Transverse colon (tissue), 4 donors: ENCODE measurements at regions of chr6 and their contacts with region 1.

Region 1: DNA sequence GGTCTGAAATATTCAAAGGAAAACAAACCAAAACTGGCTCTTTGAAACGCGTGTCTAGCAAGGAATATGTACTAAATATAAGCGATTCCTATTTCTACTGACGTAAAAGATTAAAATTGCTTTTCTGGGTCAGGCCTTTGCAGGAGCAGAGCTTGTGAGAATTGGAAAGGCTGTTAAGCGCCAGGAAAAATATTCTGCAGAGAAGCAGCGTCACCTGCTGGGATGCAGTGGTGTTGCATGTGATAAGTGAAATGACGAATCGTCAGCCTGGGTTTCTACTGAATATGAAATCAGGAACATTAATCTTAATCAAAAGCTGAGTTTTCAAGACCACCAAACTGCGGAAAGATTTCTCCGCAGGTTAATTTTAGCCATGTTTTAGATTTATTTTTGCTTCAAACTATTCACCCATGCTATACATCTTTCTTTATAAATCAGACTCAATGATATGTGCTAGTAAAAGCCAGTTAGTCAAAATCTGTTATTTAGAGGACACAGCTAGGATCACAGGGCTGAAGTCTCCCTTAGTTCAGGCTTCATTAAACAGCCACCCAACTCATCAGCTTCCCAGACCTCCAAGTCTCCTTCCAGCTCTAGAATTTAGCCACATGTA is 67.4 kb downstream of the ALDH8A1 start:
- DNase-seq: peak; percentile 78
- H3K4me3 ChIP-seq: no peak overlapping the region
- H3K27ac ChIP-seq: no peak overlapping the region
- H3K4me1 ChIP-seq: peaks cover 0 to 7% (median 0%) of the 10 kb centered on the region in 4 donors
- H3K27me3 ChIP-seq: no peaks in the 10 kb centered on the region
- CTCF ChIP-seq: peak; percentile 90 to 97 (median 96)
- EP300 ChIP-seq: no peak
- POLR2A ChIP-seq: no peak

Region 2: DNA sequence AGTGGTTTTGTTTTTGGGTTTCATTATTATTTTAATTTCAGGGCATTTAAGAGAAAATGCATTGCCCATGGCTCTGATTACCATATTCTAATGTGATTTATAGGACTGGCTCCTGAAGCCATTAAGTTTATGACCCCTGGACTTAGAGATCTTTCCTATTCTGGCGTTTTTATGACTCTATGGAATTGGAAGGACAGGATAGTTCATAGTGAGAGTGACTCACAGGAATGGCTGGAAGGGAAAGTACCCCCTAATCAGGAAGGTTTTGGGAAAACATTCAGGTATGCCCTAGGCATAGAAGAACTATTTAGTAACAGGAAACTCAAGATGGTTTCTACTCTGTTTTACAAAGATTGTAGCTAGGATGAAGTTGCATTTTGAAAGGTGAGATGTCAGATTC is 721.5 kb before region 1 on chr6:
- in situ Hi-C with region 1: loop called in 3 of 4 experiments (anchors 5 to 25 kb)
- intact Hi-C with region 1: no loop called
- DNase-seq: no peak
- H3K4me3 ChIP-seq: no peak overlapping the region
- H3K27ac ChIP-seq: peak overlapping the region in 3 of 4 donors; percentile 44 to 59 (median 49)
- H3K4me1 ChIP-seq: peaks cover 0 to 22% (median 0%) of the 10 kb centered on the region in 4 donors
- H3K27me3 ChIP-seq: no peaks in the 10 kb centered on the region
- CTCF ChIP-seq: no peak
- EP300 ChIP-seq: peak; percentile 16
- POLR2A ChIP-seq: no peak

Region 3: DNA sequence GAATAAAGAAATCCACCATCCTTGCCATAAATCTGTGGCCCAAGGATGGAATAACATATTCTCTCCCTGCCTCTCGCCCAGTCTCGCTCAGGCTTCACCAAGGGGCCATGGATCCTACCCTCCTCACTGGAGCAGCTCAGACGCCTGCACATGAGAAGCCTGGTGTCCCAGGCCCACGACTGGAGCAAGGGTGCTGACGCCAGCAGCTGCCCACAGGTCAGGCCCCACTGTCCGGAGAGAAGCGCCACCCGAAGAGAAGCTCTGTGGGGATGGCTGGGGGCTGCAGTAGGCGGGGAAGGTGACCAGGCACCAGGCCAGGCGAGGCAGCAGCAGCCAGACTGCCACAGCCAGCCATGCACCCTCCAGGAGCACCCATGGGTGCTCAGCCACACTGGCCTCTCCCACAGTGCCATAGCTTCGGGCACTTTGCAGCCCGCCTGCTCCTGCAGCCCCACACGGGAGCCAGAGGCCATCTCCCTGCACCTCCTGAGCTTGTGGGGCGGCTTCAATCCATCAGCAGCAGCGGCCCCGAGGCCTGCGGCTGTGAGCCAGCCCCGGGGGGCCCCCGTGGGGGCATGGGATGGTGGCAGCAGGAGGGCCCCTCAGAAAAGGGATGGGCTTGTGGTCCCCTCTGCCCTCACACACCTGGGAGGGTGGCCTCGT is 278.4 kb before region 1 on chr6:
- in situ Hi-C with region 1: no loop called
- intact Hi-C with region 1: no loop called
- DNase-seq: no peak
- H3K4me3 ChIP-seq: no peak overlapping the region
- H3K27ac ChIP-seq: no peak overlapping the region
- H3K4me1 ChIP-seq: no peaks in the 10 kb centered on the region
- H3K27me3 ChIP-seq: no peaks in the 10 kb centered on the region
- CTCF ChIP-seq: no peak
- EP300 ChIP-seq: no peak
- POLR2A ChIP-seq: no peak

Region 4: GRCh38 chr6:134640975-134641429 is 241.5 kb before region 1 on chr6:
- in situ Hi-C with region 1: loop called in 1 of 4 experiments (anchors 10 kb)
- intact Hi-C with region 1: no loop called
- DNase-seq: peak; percentile 84
- H3K4me3 ChIP-seq: no peak overlapping the region
- H3K27ac ChIP-seq: peak overlapping the region in 2 of 4 donors; percentile 24 to 38
- H3K4me1 ChIP-seq: peaks cover 0 to 40% (median 10%) of the 10 kb centered on the region in 4 donors
- H3K27me3 ChIP-seq: no peaks in the 10 kb centered on the region
- CTCF ChIP-seq: peak; percentile 84 to 98 (median 89)
- EP300 ChIP-seq: no peak
- POLR2A ChIP-seq: no peak